AG04449 (cell line): ENCODE measurements at regions of chr14 and their contacts with region 1.

Region 1: GRCh38 chr14:100108042-100108825 is 43.0 kb downstream of the EVL start:
- DNase-seq: no peak
- H3K4me3 ChIP-seq: no peak overlapping the region
- CTCF ChIP-seq: peak; percentile 91

Region 2: DNA sequence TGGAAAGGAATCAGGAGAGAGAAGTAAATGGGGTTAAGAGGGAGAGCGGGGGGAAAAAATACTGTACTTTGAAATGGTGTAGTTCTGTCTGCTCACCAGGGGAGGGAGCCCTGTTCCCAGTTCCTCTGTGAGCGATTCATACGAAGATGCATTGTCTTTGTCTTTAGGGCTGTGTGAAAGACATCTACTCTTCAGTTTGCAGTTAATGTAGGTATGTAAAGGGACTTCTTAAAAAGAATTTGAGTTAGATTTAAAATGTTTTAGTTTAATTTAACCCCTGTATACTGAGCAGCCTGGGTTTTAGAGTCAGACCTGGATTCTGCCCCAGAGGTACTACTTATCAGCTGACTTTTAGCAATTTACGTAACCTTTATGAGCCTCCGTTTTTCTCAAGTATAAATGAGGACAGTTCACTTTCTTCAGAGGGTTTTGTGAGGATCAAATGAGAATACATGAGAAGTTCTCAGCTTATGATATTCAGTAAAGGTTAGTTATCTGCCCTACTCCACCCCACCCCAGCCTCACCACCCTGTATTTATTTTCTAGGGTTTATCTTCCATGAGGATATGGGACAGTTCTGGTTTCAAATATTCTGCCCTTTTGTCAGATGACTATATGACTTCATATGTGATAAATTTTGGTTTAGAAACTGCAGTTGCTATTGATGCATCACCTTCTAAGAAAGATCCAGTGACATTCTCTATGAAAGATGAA is 125.5 kb before region 1 on chr14:
- CTCF ChIA-PET with region 1: interaction called, 286 read pairs
- POLR2A ChIA-PET with region 1: no interaction called
- DNase-seq: no peak
- H3K4me3 ChIP-seq: no peak overlapping the region
- CTCF ChIP-seq: peak; percentile 82

Region 3: GRCh38 chr14:100004392-100004791 is 103.8 kb before region 1 on chr14:
- CTCF ChIA-PET with region 1: interaction called, 11 read pairs
- POLR2A ChIA-PET with region 1: no interaction called
- DNase-seq: no peak
- H3K4me3 ChIP-seq: no peak overlapping the region
- CTCF ChIP-seq: no peak

Region 4: DNA sequence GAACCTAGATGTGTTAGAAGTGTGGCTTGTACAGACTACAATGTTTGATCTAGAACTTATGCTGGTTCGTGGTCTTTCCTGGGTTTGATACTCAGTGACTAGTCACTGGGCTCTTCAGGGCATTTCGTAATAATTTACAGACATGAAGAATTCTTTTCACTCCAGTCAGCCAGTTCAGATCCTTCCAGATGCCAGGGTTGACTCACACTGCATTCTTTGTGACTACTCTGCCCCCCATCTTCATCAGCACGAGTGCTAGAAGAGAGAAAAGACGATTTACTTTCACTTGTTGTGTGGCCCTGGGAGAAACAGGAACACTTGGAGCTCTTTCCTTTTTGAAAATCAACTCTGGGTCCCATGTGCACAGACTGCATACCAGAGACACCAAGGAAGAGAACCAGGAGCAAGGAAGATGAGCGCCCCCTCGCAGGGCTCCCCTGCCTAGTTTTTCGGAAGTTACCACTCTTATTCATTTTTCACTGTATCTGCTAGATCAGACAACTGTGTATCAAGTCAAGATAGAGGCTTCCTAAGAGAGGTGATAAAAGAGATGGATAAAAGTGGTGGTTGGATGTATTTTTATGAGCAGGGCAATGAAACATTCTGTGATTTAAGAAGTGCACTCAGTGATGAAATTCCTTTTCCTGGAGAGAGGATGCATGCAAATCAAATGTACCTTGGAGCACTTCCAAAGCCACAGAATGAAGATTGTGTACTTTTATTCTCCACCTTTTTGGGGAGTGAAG is 76.5 kb before region 1 on chr14:
- CTCF ChIA-PET with region 1: interaction called, 20 read pairs
- POLR2A ChIA-PET with region 1: no interaction called
- DNase-seq: peak; percentile 96
- H3K4me3 ChIP-seq: peak overlapping the region; percentile 57
- CTCF ChIP-seq: no peak

Region 5: GRCh38 chr14:100078991-100079725 is 29.1 kb before region 1 on chr14:
- CTCF ChIA-PET with region 1: interaction called, 39 read pairs
- POLR2A ChIA-PET with region 1: interaction called, 4 read pairs
- DNase-seq: peak; percentile 47
- H3K4me3 ChIP-seq: no peak overlapping the region; the same call in 1 of the 2 replicates
- CTCF ChIP-seq: peak; percentile 21

Region 6: GRCh38 chr14:100132161-100132902 is 24.1 kb after region 1 on chr14:
- CTCF ChIA-PET with region 1: interaction called, 12 read pairs
- POLR2A ChIA-PET with region 1: no interaction called
- DNase-seq: no peak
- H3K4me3 ChIP-seq: no peak overlapping the region
- CTCF ChIP-seq: no peak

Region 7: GRCh38 chr14:100221533-100222223 is 113.4 kb after region 1 on chr14:
- CTCF ChIA-PET with region 1: no interaction called
- POLR2A ChIA-PET with region 1: no interaction called
- DNase-seq: peak; percentile 9
- H3K4me3 ChIP-seq: peak overlapping the region; percentile 55
- CTCF ChIP-seq: no peak

Region 8: DNA sequence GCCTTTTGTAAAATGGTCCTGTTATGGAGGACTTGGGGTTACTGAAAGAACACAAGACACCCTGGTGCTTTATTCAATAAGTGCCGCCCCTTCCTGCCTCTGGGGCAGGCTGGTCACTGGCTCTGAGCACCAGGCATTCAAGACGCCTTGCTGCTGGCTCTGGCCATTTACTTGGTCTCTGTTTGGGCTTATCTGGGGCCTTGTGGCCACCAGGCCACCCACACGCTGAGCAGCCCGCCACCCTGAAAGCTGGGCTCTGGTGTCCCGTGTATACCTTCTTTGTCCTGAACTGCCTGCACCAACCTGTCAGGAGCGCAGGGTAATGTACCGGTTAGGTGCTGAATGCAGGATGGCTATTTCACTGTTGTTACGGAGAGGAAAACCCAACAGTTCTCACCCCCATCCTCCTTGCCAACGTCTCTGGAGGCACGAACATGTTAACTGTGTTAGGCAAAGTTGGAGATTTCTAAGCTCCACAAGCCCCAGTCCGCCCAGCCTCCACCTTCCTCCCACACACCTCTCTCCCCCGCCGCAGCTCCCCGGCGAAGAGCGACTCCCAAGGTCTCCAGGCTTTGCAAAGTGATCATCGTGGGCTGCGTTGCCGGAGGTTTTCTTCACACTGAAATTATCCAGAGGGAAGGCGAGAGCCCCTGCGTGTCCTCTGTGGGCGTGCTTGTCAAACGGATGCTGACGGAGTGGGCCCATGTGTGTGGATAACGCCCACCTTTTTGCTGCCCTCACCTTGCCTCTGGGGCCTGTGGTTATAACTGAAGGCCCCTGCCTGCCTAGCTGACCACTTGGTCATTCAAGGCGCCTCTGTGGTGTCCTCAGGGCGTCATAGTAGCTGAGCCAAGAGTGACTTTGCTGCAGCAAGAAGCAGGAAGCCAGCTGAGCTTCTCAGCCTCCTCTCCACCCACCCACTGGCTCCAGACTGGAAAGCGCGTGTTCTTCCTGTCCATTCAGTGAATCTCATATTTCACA is 497.8 kb after region 1 on chr14:
- CTCF ChIA-PET with region 1: no interaction called
- POLR2A ChIA-PET with region 1: no interaction called
- DNase-seq: no peak
- H3K4me3 ChIP-seq: no peak overlapping the region
- CTCF ChIP-seq: no peak